Colonic mucosa (tissue), 4 donors: ENCODE measurements at regions of chr13 and their contacts with region 1.

Region 1: GRCh38 chr13:70571221-70571620 is 463.0 kb upstream of the KLHL1 start:
- DNase-seq: no peak
- H3K4me3 ChIP-seq: no peak overlapping the region
- H3K27ac ChIP-seq: no peak overlapping the region
- H3K4me1 ChIP-seq: no peaks in the 10 kb centered on the region
- H3K27me3 ChIP-seq: no peaks in the 10 kb centered on the region
- CTCF ChIP-seq: no peak

Region 2: DNA sequence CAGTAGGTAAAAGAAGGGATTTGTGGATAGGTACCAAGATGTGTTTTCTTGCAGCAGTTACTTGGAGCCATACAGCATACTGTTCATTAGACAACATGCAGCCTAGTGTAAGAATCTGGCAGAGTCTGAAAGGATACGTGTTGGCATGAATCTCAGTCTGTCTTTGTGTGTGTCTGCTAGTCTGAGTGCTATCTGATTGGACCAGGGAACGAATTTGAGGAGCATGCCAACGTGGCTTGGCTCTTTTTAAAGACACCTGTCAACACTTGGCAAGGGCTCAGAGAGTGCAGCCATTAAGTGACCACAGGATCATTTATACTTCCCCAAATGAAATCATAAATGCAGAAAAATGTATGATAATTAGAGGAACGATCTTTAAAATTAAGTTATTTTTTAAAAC is 491.2 kb before region 1 on chr13:
- intact Hi-C with region 1: no loop called
- DNase-seq: no peak
- H3K4me3 ChIP-seq: no peak overlapping the region
- H3K27ac ChIP-seq: no peak overlapping the region
- H3K4me1 ChIP-seq: no peaks in the 10 kb centered on the region
- H3K27me3 ChIP-seq: no peaks in the 10 kb centered on the region
- CTCF ChIP-seq: no peak

Region 3: GRCh38 chr13:70098669-70099068 is 472.6 kb before region 1 on chr13:
- intact Hi-C with region 1: loop called (anchors 10 kb)
- DNase-seq: no peak
- H3K4me3 ChIP-seq: no peak overlapping the region
- H3K27ac ChIP-seq: no peak overlapping the region
- H3K4me1 ChIP-seq: no peaks in the 10 kb centered on the region
- H3K27me3 ChIP-seq: no peaks in the 10 kb centered on the region
- CTCF ChIP-seq: peak; percentile 20

Region 4: DNA sequence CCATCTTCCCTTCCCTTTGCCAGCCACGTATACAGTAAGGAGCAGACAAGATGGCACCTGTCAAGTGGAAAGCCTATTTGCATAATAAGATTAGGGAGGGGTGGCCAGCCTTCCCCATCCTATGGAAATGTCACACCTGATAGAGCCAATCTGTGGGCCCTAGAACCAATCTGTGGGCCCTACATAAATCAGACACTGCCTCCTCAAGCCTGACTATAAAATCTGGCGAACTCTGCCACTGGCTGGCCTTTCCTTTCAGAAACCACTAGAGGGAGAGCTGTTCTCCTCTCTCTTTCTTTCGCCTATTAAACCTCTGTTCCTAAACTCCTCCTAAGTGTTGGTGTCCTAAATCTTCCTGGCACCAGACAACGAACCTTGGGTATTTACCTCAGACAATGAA is 231.5 kb before region 1 on chr13:
- intact Hi-C with region 1: loop called (anchors 5 kb)
- DNase-seq: peak; percentile 20
- H3K4me3 ChIP-seq: no peak overlapping the region
- H3K27ac ChIP-seq: no peak overlapping the region
- H3K4me1 ChIP-seq: no peaks in the 10 kb centered on the region
- H3K27me3 ChIP-seq: no peaks in the 10 kb centered on the region
- CTCF ChIP-seq: peak; percentile 55

Region 5: GRCh38 chr13:70523622-70524021 is 47.6 kb before region 1 on chr13:
- intact Hi-C with region 1: no loop called
- DNase-seq: no peak
- H3K4me3 ChIP-seq: no peak overlapping the region
- H3K27ac ChIP-seq: no peak overlapping the region
- H3K4me1 ChIP-seq: no peaks in the 10 kb centered on the region
- H3K27me3 ChIP-seq: no peaks in the 10 kb centered on the region
- CTCF ChIP-seq: no peak

Region 6: DNA sequence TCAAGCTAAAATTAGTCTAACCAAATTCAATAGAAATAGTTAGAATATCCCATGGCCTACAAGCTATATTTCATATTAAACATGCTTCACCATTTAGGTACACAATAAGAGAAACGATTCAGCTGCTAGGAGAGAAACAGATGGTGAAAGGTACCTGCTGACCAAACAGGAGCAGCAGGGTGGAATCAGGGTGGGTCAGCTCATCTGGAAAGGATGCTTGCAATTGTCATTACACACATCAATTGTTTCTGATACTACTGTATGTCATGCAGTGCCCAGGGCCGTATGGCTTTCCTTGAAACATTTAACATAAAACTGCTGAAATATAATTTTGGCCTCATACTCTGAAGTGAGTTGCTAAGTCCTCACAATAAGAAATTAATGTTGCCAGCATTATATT is 519.8 kb after region 1 on chr13:
- intact Hi-C with region 1: no loop called
- DNase-seq: no peak
- H3K4me3 ChIP-seq: no peak overlapping the region
- H3K27ac ChIP-seq: no peak overlapping the region
- H3K4me1 ChIP-seq: no peaks in the 10 kb centered on the region
- H3K27me3 ChIP-seq: no peaks in the 10 kb centered on the region
- CTCF ChIP-seq: no peak